Adrenal gland (tissue), 19 donors: ENCODE measurements at regions of chr17 and their contacts with region 1.

Region 1: GRCh38 chr17:10836966-10837590 is 809 bp downstream of the PIRT start:
- DNase-seq: no peak
- H3K4me3 ChIP-seq: no peak overlapping the region
- H3K27ac ChIP-seq: no peak overlapping the region
- H3K4me1 ChIP-seq: no peaks in the 10 kb centered on the region
- H3K27me3 ChIP-seq: no peaks in the 10 kb centered on the region
- CTCF ChIP-seq: no peak
- POLR2A ChIP-seq: no peak

Region 2: GRCh38 chr17:10754109-10754508 is 83.0 kb before region 1 on chr17:
- intact Hi-C with region 1: loop called in 1 of 2 experiments (anchors 5 kb)
- DNase-seq: peak; percentile 54 to 91 (median 85)
- H3K4me3 ChIP-seq: no peak overlapping the region
- H3K27ac ChIP-seq: no peak overlapping the region
- H3K4me1 ChIP-seq: no peaks in the 10 kb centered on the region
- H3K27me3 ChIP-seq: no peaks in the 10 kb centered on the region
- CTCF ChIP-seq: peak; percentile 42 to 73 (median 54)
- POLR2A ChIP-seq: no peak